Activated T-helper 1 cell treated with anti-CD3 and anti-CD28 coated beads, Interleukin-12 subunit alpha, Interleukin-12 subunit beta, Interleukin-2, Interleukin-4 antibody, amounts not matched to agents 30 ng/mL and 10 ng/mL and 1 ng/mL, durations not matched to agents 14 hours and 24 hours and 36 hours (primary cell): ENCODE measurements at regions of chr14 and their contacts with region 1.

Region 1: DNA sequence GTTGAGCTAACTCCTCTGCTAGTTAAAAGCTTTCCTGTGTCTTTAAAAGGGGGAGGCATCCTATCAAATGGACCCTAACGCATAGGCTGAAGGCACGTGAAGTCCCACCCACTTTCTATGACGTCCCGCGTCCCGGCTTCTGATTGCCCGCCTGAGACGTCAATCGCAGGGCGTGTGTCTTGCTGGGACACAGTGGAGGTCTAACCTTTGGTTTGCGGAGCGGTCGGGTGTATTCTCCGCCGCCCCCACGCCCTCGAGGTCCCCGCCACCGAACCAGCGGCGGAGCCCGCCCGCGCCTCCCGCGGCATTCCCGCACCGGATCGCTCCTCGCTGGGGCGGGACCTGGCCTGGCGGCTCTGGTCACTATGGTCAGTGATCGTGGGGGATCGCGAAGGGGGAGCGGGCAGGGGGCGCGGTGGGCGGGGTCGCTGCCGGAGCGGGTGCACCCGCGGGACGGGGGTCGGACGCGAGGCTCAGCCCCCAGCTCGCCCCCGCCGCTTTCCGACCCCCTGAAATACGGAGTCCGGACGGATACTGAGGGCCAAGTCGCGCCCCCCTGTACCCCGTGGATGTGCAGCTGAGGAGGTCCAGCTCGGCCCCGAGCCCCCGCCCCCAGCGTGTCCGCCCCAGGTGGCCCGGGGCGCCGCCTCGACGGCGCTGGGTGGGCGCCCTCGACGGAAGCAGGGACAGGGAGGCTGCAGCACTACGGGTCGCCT is at the start of gene OTUB2:
- DNase-seq: peak; percentile 96
- H3K4me3 Mint-ChIP-seq: peak within 1 kb of the TSS; percentile 85
- H3K27ac Mint-ChIP-seq: peak within 1 kb of the TSS; percentile 60
- H3K4me1 Mint-ChIP-seq: peaks cover 39% of the 10 kb centered on the region
- H3K27me3 Mint-ChIP-seq: no peaks in the 10 kb centered on the region
- total RNA-seq, gene OTUB2: 1.5 TPM in 2 replicates

Region 2: GRCh38 chr14:93712838-93713724 is 313.2 kb before region 1 on chr14:
- intact Hi-C with region 1: no loop called
- DNase-seq: no peak
- H3K4me3 Mint-ChIP-seq: no peak overlapping the region
- H3K27ac Mint-ChIP-seq: no peak overlapping the region
- H3K4me1 Mint-ChIP-seq: no peaks in the 10 kb centered on the region
- H3K27me3 Mint-ChIP-seq: no peaks in the 10 kb centered on the region

Region 3: GRCh38 chr14:93959239-93960107 is 66.9 kb before region 1 on chr14:
- intact Hi-C with region 1: loop called (anchors 1 kb)
- DNase-seq: peak; percentile 94
- H3K4me3 Mint-ChIP-seq: peak overlapping the region; percentile 84
- H3K27ac Mint-ChIP-seq: peak overlapping the region; percentile 100
- H3K4me1 Mint-ChIP-seq: peaks cover 97% of the 10 kb centered on the region
- H3K27me3 Mint-ChIP-seq: no peaks in the 10 kb centered on the region

Region 4: GRCh38 chr14:93975791-93976476 is 50.4 kb before region 1 on chr14:
- intact Hi-C with region 1: loop called (anchors 1 kb)
- DNase-seq: peak; percentile 50
- H3K4me3 Mint-ChIP-seq: peak overlapping the region; percentile 76
- H3K27ac Mint-ChIP-seq: peak overlapping the region; percentile 99
- H3K4me1 Mint-ChIP-seq: peaks cover 96% of the 10 kb centered on the region
- H3K27me3 Mint-ChIP-seq: peaks cover 2% of the 10 kb centered on the region

Region 5: GRCh38 chr14:94056579-94057308 is 30.4 kb after region 1 on chr14:
- intact Hi-C with region 1: loop called (anchors 1 kb)
- DNase-seq: peak; percentile 45
- H3K4me3 Mint-ChIP-seq: peak overlapping the region; percentile 6
- H3K27ac Mint-ChIP-seq: peak overlapping the region; percentile 77
- H3K4me1 Mint-ChIP-seq: peaks cover 70% of the 10 kb centered on the region
- H3K27me3 Mint-ChIP-seq: no peaks in the 10 kb centered on the region

Region 6: GRCh38 chr14:94173885-94174603 is 147.7 kb after region 1 on chr14 and contains the start of gene PPP4R4:
- intact Hi-C with region 1: loop called (anchors 5 kb)
- DNase-seq: peak; percentile 85
- H3K4me3 Mint-ChIP-seq: peak within 1 kb of the TSS; percentile 83
- H3K27ac Mint-ChIP-seq: peak within 1 kb of the TSS; percentile 81
- H3K4me1 Mint-ChIP-seq: peaks cover 22% of the 10 kb centered on the region
- H3K27me3 Mint-ChIP-seq: peaks cover 49% of the 10 kb centered on the region
- total RNA-seq, gene PPP4R4: 2.2 and 2.4 TPM in 2 replicates

Region 7: DNA sequence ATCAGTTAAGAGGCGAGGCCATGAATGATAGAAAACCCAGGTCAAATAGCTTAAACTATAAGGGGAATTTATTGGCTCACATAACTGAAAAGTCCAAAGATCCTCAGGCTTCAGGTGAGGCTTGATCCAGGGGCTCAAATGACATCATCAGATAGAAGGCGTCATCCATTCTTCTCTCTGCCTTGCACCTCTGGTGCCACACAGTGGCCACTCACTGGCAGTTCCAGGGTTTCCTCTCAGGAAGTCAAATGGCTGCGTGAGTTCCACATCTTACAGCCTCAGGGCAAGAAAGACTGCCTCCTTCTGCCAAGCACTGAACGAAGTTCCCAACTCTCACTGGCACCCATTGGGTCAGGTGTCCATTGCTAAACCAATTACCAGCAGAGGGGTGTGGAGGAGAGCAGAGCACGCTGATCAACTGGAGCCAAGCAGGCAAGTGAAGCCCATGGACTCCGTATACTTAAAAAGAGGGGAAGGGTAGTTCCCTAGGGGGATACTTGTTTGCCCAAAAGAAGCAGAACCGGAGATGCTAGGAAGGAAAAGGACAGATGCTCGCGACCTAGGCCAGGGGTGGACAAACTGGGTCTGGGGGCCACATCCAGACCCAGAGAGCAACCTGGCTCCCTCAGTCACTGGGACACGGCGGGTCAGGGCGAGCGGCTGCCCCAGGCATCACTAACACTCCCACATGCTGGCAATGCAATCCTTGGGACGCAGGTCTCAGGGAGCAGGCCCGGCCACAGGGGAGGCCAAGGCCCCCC is 655.1 kb after region 1 on chr14:
- intact Hi-C with region 1: no loop called
- DNase-seq: no peak
- H3K4me3 Mint-ChIP-seq: no peak overlapping the region
- H3K27ac Mint-ChIP-seq: no peak overlapping the region
- H3K4me1 Mint-ChIP-seq: no peaks in the 10 kb centered on the region
- H3K27me3 Mint-ChIP-seq: no peaks in the 10 kb centered on the region